ENCODE measurements at regions of chr6 and their contacts with region 1.

Region 1: DNA sequence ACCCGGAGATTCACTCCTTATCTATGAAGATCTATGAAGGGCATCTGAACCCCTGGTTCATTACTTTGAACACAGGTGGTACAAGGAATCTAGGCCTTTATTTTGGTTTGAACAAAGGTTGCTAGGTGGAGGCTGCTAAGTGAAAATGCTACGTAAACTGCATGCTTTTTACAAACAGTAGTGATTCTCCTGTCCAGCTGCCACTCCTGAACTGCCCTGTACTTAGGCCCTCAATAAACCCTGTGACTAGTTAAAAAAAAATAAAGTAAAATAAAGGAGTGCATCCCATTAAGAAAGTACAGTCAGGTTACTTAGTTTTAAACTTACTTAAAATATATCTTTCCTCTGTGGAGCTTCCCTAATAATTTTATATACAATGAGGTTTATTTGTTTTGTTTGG is 27.7 kb upstream of the ARG1 start:
- DNase-seq: no peak
- H3K4me3 ChIP-seq: no peak overlapping the region
- CTCF ChIP-seq: no peak
- POLR2A ChIP-seq: no peak

Region 2: GRCh38 chr6:131565056-131565455 is 19.7 kb after region 1 on chr6:
- intact Hi-C with region 1: loop called (anchors 1 kb)
- DNase-seq: no peak
- H3K4me3 ChIP-seq: no peak overlapping the region
- CTCF ChIP-seq: no peak
- POLR2A ChIP-seq: no peak

Region 3: GRCh38 chr6:132020138-132020581 is 474.8 kb after region 1 on chr6:
- intact Hi-C with region 1: no loop called
- DNase-seq: peak; percentile 40 to 87
- H3K4me3 ChIP-seq: no peak overlapping the region
- CTCF ChIP-seq: no peak
- POLR2A ChIP-seq: no peak

Measured in lower leg skin (tissue), 4 donors.